B cell (primary cell): ENCODE measurements at regions of chr1 and their contacts with region 1.

Region 1: GRCh38 chr1:165597883-165598675 is 33.0 kb upstream of the MGST3 start:
- DNase-seq: peak; percentile 91
- ATAC-seq: peak; percentile 98
- H3K4me3 ChIP-seq: peak overlapping the region; percentile 11 to 71 (median 60)
- H3K4me3 Mint-ChIP-seq: peak overlapping the region; percentile 94
- H3K27ac ChIP-seq: peak overlapping the region in 1 of 2 donors; percentile 17
- H3K27ac Mint-ChIP-seq: peak overlapping the region; percentile 80
- H3K4me1 ChIP-seq: peaks cover 19 to 23% of the 10 kb centered on the region in 2 donors
- H3K4me1 Mint-ChIP-seq: peaks cover 21% of the 10 kb centered on the region
- H3K27me3 ChIP-seq: peaks cover 0 to 37% (median 27%) of the 10 kb centered on the region in 4 experiments
- H3K27me3 Mint-ChIP-seq: peaks cover 59% of the 10 kb centered on the region
- CTCF ChIP-seq: no peak

Region 2: DNA sequence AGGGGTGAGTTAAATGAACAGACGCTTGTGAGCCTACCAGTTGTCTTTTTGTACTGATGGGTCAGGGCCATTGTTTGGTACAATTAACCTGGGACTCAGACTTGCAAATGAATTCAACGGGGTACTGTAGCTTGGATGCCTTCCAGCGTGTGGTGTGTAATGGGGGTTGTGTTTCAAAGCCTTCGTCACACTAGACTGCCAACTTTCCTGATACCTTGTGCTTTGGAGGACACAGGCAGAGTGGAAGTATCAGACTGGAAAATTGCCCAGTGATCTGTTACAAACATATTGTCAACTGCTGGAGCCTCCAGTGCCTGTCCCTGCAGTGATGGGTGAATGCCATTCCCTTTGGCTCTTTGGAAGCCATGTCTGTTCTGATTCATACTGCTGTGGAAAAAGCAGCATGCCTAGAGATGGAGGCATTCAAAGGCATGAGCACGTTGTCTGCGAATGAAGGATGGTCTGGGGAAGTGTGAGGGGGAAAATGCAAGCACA is 626.1 kb before region 1 on chr1:
- CTCF ChIA-PET with region 1: no interaction called
- POLR2A ChIA-PET with region 1: no interaction called
- intact Hi-C with region 1: no loop called
- DNase-seq: no peak
- ATAC-seq: no peak
- H3K4me3 ChIP-seq: no peak overlapping the region
- H3K4me3 Mint-ChIP-seq: no peak overlapping the region
- H3K27ac ChIP-seq: no peak overlapping the region
- H3K27ac Mint-ChIP-seq: no peak overlapping the region
- H3K4me1 ChIP-seq: no peaks in the 10 kb centered on the region
- H3K4me1 Mint-ChIP-seq: no peaks in the 10 kb centered on the region
- H3K27me3 ChIP-seq: no peaks in the 10 kb centered on the region
- H3K27me3 Mint-ChIP-seq: no peaks in the 10 kb centered on the region
- CTCF ChIP-seq: no peak

Region 3: DNA sequence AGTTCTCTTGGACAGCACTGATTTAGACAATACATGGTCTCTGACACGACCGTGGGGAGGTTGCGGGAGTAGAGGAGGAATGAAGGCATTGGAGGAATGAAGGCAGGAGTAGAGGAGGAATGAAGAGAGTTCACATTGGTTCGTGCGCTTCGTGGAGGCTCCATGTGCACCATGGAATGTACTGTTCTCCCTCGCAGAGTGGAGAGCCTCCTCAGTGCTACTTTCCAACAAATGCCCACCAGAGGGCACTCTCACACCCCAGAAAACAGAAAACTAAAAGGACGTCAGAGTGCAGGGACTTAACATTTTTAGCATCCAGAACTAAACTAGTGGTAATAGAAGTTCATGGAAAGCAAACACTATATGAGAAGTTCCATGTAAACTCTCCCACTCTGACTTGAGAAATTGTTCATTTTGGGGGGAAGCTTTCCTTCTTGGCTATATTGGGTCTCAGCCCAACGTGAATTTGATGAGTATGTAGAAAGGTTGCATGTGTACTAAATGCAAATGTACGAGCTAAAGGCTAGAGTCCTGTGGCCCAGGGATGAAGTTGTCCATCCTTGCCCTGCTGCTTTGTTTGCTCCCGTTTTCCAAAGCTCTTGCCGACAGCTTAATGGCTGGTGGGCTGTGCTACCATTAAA is 453.2 kb before region 1 on chr1:
- CTCF ChIA-PET with region 1: interaction called, 10 read pairs
- POLR2A ChIA-PET with region 1: no interaction called
- intact Hi-C with region 1: no loop called
- DNase-seq: peak; percentile 27
- ATAC-seq: no peak
- H3K4me3 ChIP-seq: no peak overlapping the region
- H3K4me3 Mint-ChIP-seq: no peak overlapping the region
- H3K27ac ChIP-seq: no peak overlapping the region
- H3K27ac Mint-ChIP-seq: no peak overlapping the region
- H3K4me1 ChIP-seq: no peaks in the 10 kb centered on the region
- H3K4me1 Mint-ChIP-seq: no peaks in the 10 kb centered on the region
- H3K27me3 ChIP-seq: no peaks in the 10 kb centered on the region
- H3K27me3 Mint-ChIP-seq: peaks cover 9% of the 10 kb centered on the region
- CTCF ChIP-seq: peak; percentile 74

Region 4: DNA sequence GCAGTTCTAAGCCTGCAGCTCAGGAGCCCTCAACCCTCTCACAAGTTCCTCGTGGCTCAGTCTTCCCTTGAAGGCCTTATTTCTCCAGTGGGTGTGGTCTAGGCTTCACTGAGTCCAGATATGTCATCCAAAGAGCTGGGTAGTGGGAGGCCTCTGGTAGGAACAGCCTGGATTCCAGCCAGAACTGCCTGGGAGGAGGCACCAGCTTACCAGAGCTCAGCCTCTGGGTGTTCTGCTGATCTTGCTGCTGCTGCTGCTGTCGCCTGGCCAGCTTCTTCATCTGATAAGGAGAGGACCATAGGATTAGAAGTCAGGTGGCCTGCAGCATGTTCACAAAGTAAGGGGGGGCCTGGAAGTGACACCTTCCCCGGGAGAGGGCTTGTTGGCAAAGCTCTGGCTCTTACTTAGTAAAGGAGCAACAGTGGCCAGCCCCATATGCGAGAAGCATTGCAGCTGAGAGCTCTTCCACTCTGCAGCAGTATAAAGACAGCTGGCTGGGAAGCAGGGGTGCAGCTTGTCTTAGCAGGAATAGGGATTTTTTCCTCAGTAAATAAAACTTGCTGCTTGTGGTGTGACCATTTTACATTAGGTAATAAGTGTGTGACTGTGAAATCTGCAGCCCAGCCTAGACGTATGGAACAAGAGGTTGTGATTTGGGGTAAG is 390.1 kb before region 1 on chr1:
- CTCF ChIA-PET with region 1: no interaction called
- POLR2A ChIA-PET with region 1: no interaction called
- intact Hi-C with region 1: no loop called
- DNase-seq: no peak
- ATAC-seq: no peak
- H3K4me3 ChIP-seq: no peak overlapping the region
- H3K4me3 Mint-ChIP-seq: no peak overlapping the region
- H3K27ac ChIP-seq: no peak overlapping the region
- H3K27ac Mint-ChIP-seq: no peak overlapping the region
- H3K4me1 ChIP-seq: no peaks in the 10 kb centered on the region
- H3K4me1 Mint-ChIP-seq: no peaks in the 10 kb centered on the region
- H3K27me3 ChIP-seq: no peaks in the 10 kb centered on the region
- H3K27me3 Mint-ChIP-seq: peaks cover 7% of the 10 kb centered on the region
- CTCF ChIP-seq: no peak

Region 5: DNA sequence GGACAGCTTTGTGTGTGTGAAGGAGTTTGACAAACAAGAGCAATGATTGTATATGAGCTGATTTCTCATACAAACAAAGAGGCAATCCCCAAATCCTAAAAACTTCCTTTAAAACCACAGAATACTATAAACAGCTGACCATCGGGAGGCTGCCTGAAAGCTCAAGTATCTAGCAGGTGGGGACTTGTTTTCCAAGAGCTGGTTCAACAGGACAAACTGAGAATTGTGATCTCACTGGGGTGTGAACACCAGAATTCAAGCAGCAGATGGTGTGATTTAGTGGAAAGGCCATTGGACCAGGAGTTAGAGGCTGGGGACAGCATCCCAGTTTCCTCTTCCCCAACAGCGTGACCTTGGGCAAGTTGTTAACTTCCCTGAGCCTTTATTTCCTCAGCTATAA is 255.5 kb before region 1 on chr1:
- CTCF ChIA-PET with region 1: no interaction called
- POLR2A ChIA-PET with region 1: no interaction called
- intact Hi-C with region 1: no loop called
- DNase-seq: no peak
- ATAC-seq: no peak
- H3K4me3 ChIP-seq: no peak overlapping the region
- H3K4me3 Mint-ChIP-seq: no peak overlapping the region
- H3K27ac ChIP-seq: no peak overlapping the region
- H3K27ac Mint-ChIP-seq: no peak overlapping the region
- H3K4me1 ChIP-seq: no peaks in the 10 kb centered on the region
- H3K4me1 Mint-ChIP-seq: no peaks in the 10 kb centered on the region
- H3K27me3 ChIP-seq: peaks cover 0 to 14% (median 11%) of the 10 kb centered on the region in 4 experiments
- H3K27me3 Mint-ChIP-seq: peaks cover 37% of the 10 kb centered on the region
- CTCF ChIP-seq: no peak

Region 6: GRCh38 chr1:165392634-165393571 is 205.2 kb before region 1 on chr1:
- CTCF ChIA-PET with region 1: interaction called, 206 read pairs
- POLR2A ChIA-PET with region 1: no interaction called
- intact Hi-C with region 1: loop called (anchors 1 kb)
- DNase-seq: peak; percentile 94
- ATAC-seq: peak; percentile 99
- H3K4me3 ChIP-seq: peak overlapping the region in 1 of 5 experiments; percentile 24
- H3K4me3 Mint-ChIP-seq: peak overlapping the region; percentile 55
- H3K27ac ChIP-seq: no peak overlapping the region
- H3K27ac Mint-ChIP-seq: peak overlapping the region; percentile 91
- H3K4me1 ChIP-seq: peaks cover 20 to 33% of the 10 kb centered on the region in 2 donors
- H3K4me1 Mint-ChIP-seq: peaks cover 15% of the 10 kb centered on the region
- H3K27me3 ChIP-seq: peaks cover 0 to 84% (median 75%) of the 10 kb centered on the region in 4 experiments
- H3K27me3 Mint-ChIP-seq: peaks cover 82% of the 10 kb centered on the region
- CTCF ChIP-seq: peak; percentile 93

Region 7: DNA sequence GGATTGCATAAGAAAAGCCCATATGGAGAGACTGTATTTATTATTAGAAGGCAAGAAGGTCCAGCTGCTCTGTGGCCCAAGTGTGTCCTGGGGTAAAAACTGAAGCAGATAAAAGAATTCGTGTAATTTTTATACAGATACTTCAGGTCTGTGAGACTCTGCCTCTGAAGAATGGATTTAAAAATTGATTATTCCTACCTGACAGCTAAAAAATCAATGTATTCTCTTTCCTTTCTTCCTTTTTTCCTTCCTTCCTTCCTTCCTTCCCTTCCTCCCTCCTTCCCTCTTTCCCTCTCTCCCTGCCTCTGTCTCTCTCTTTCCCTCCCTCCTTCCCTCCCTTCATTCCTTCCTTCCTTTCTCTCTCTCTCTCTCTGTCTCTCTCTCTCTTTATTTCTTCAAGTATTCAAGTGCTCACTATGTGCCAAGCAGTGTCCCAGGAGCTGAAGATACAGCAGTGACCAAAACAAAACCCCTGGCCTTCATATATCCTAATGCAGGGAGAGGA is 21.6 kb after region 1 on chr1:
- CTCF ChIA-PET with region 1: no interaction called
- POLR2A ChIA-PET with region 1: no interaction called
- intact Hi-C with region 1: no loop called
- DNase-seq: no peak
- ATAC-seq: no peak
- H3K4me3 ChIP-seq: no peak overlapping the region
- H3K4me3 Mint-ChIP-seq: no peak overlapping the region
- H3K27ac ChIP-seq: no peak overlapping the region
- H3K27ac Mint-ChIP-seq: no peak overlapping the region
- H3K4me1 ChIP-seq: no peaks in the 10 kb centered on the region
- H3K4me1 Mint-ChIP-seq: no peaks in the 10 kb centered on the region
- H3K27me3 ChIP-seq: peaks cover 0 to 14% (median 4%) of the 10 kb centered on the region in 4 experiments
- H3K27me3 Mint-ChIP-seq: peaks cover 48% of the 10 kb centered on the region
- CTCF ChIP-seq: no peak

Region 8: DNA sequence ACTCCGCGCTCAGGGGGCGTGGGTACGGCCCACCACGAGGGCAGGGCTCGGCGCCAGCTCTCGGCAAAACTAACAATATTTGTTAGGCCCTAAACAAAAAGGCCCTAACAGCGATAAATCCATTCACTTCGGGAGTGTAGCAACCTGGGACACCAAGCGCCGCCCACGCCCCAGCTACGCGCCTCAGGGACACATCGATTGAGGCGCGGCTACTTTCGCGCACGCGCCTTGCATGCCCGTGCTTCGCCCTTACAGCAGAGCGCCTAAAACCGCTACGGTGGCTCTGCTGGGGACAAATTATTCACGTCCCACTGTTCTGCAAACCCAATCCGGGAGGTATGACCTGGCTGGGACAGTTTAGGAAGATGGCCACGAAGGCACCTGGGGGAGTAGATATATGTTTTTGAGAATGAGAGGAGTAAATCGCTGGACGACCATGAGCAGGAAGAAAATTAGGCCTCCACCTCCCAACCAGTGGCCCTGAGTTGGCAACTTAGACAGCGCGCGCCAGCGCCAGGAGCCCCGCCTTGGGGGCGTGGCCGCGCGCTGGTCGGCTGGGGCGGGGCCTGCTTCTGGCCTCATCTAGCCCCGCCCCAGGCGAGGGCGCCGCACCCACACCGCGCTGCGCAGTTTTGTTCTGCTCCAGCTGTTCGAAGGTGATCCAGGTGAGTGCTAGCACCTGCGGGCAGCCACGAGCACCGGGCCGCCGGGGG is 32.7 kb after region 1 on chr1 and contains the start of gene MGST3:
- CTCF ChIA-PET with region 1: interaction called, 9 read pairs
- POLR2A ChIA-PET with region 1: no interaction called
- intact Hi-C with region 1: loop called (anchors 1 kb)
- DNase-seq: peak; percentile 95
- ATAC-seq: peak; percentile 94
- H3K4me3 ChIP-seq: peak within 1 kb of the TSS; percentile 74 to 93 (median 84)
- H3K4me3 Mint-ChIP-seq: no peak within 1 kb of the TSS
- H3K27ac ChIP-seq: peak within 1 kb of the TSS; percentile 72 to 83
- H3K27ac Mint-ChIP-seq: peak within 1 kb of the TSS; percentile 67
- H3K4me1 ChIP-seq: peaks cover 27 to 31% of the 10 kb centered on the region in 2 donors
- H3K4me1 Mint-ChIP-seq: peaks cover 31% of the 10 kb centered on the region
- H3K27me3 ChIP-seq: no peaks in the 10 kb centered on the region
- H3K27me3 Mint-ChIP-seq: no peaks in the 10 kb centered on the region
- CTCF ChIP-seq: no peak
- total RNA-seq, gene MGST3: 41.7 and 46.0 TPM in 2 replicates

Region 9: DNA sequence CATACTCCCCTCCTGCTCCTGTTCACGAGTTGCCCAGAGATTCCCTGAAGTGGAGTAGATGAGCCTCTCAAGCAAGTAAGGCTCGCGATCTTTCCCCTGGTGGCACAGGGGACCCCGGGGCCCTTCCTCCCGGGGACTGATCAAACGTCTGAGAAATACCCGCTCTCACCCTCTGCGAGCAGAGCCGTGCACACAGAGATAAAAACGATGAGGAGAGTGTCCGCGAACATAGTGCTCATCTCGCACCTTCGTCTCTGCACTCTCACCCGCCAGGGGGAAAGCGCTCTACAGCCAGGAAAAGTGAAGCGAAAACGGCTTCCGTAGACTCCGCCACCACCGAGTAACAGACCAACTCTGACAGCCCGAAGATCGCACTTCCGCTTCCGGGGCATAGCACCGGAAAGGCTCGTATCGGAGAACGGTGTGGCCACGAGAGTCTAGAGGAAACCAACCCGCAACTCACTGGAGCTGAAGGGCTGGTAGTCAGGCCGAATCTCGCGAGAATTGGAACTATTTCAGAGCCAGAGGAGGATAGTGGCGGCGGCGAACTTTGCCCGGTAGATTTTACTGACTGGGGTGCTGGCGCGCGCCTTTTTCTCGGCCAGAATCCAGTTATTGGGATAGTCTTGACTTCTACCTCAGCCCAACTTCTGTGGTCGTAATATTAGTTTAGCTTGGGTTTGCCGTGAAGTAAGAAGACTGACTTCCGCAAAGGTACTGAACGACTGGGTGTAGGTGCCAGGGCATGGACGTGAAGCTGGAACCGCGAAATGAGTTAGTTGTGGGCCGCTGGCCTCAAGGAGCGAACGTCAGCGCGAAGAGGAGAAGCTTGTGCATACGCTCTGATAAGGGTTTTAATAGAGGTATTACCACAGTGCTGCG is 170.7 kb after region 1 on chr1 and contains the start of gene TMCO1:
- CTCF ChIA-PET with region 1: interaction called, 8 read pairs
- POLR2A ChIA-PET with region 1: no interaction called
- intact Hi-C with region 1: loop called (anchors 2 kb)
- DNase-seq: peak; percentile 97
- ATAC-seq: peak; percentile 95
- H3K4me3 ChIP-seq: peak within 1 kb of the TSS; percentile 73 to 92 (median 85)
- H3K4me3 Mint-ChIP-seq: peak within 1 kb of the TSS; percentile 98
- H3K27ac ChIP-seq: peak within 1 kb of the TSS; percentile 91 to 94
- H3K27ac Mint-ChIP-seq: peak within 1 kb of the TSS; percentile 97
- H3K4me1 ChIP-seq: peaks cover 20 to 23% of the 10 kb centered on the region in 2 donors
- H3K4me1 Mint-ChIP-seq: peaks cover 52% of the 10 kb centered on the region
- H3K27me3 ChIP-seq: no peaks in the 10 kb centered on the region
- H3K27me3 Mint-ChIP-seq: no peaks in the 10 kb centered on the region
- CTCF ChIP-seq: peak; percentile 23
- total RNA-seq, gene TMCO1: 34.8 and 39.5 TPM in 2 replicates

Region 10: DNA sequence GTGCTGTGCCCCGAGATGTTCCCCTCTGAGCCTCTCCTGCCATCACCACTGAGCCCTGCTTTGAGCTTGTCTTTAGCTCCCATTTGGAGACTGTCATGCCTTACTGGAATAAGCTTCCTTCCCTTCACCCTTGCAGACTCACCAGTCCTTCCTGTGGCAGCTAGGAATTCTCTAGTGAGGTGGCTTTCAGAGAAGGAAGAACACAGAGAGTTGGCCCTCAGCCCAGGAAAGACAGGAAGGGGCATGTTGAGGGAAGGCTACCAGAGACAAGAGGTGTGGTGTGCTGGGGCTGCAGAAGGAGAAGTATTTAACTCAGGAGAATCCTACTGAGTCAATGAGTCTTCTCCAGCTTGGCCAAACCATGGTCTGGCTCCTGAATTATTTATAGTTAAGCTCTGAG is 305.6 kb after region 1 on chr1:
- CTCF ChIA-PET with region 1: interaction called, 13 read pairs
- POLR2A ChIA-PET with region 1: no interaction called
- intact Hi-C with region 1: no loop called
- DNase-seq: no peak
- ATAC-seq: no peak
- H3K4me3 ChIP-seq: no peak overlapping the region
- H3K4me3 Mint-ChIP-seq: no peak overlapping the region
- H3K27ac ChIP-seq: no peak overlapping the region
- H3K27ac Mint-ChIP-seq: no peak overlapping the region
- H3K4me1 ChIP-seq: no peaks in the 10 kb centered on the region
- H3K4me1 Mint-ChIP-seq: no peaks in the 10 kb centered on the region
- H3K27me3 ChIP-seq: no peaks in the 10 kb centered on the region
- H3K27me3 Mint-ChIP-seq: no peaks in the 10 kb centered on the region
- CTCF ChIP-seq: no peak

Region 11: GRCh38 chr1:165928075-165928731 is 330.1 kb after region 1 on chr1:
- CTCF ChIA-PET with region 1: interaction called, 13 read pairs
- POLR2A ChIA-PET with region 1: no interaction called
- intact Hi-C with region 1: no loop called
- DNase-seq: peak; percentile 57
- ATAC-seq: peak; percentile 31
- H3K4me3 ChIP-seq: no peak overlapping the region
- H3K4me3 Mint-ChIP-seq: no peak overlapping the region
- H3K27ac ChIP-seq: no peak overlapping the region
- H3K27ac Mint-ChIP-seq: no peak overlapping the region
- H3K4me1 ChIP-seq: no peaks in the 10 kb centered on the region
- H3K4me1 Mint-ChIP-seq: no peaks in the 10 kb centered on the region
- H3K27me3 ChIP-seq: peaks cover 0 to 7% (median 5%) of the 10 kb centered on the region in 4 experiments
- H3K27me3 Mint-ChIP-seq: peaks cover 50% of the 10 kb centered on the region
- CTCF ChIP-seq: peak; percentile 66